ENCODE measurements at regions of chr14 and their contacts with region 1.

Region 1: GRCh38 chr14:53306267-53306721 is 153.2 kb upstream of the DDHD1 start:
- DNase-seq: peak in 13 of 14 experiments; percentile 1 to 63 (median 16)
- ATAC-seq: peak; percentile 41
- H3K4me3 ChIP-seq: peak overlapping the region; percentile 30
- H3K4me3 Mint-ChIP-seq: peak overlapping the region; percentile 0
- H3K27ac ChIP-seq: no peak overlapping the region
- H3K27ac Mint-ChIP-seq: no peak overlapping the region
- H3K4me1 ChIP-seq: peaks cover 3% of the 10 kb centered on the region
- H3K4me1 Mint-ChIP-seq: no peaks in the 10 kb centered on the region
- H3K27me3 ChIP-seq: peaks cover 0 to 7% of the 10 kb centered on the region in 2 experiments
- H3K27me3 Mint-ChIP-seq: peaks cover 5% of the 10 kb centered on the region
- CTCF ChIP-seq: peak; percentile 68

Region 2: GRCh38 chr14:52862632-52863335 is 443.5 kb before region 1 on chr14:
- CTCF ChIA-PET with region 1: no interaction called
- POLR2A ChIA-PET with region 1: no interaction called
- intact Hi-C with region 1: no loop called
- DNase-seq: no peak
- ATAC-seq: no peak
- H3K4me3 ChIP-seq: no peak overlapping the region
- H3K4me3 Mint-ChIP-seq: no peak overlapping the region
- H3K27ac ChIP-seq: no peak overlapping the region
- H3K27ac Mint-ChIP-seq: no peak overlapping the region
- H3K4me1 ChIP-seq: no peaks in the 10 kb centered on the region
- H3K4me1 Mint-ChIP-seq: no peaks in the 10 kb centered on the region
- H3K27me3 ChIP-seq: no peaks in the 10 kb centered on the region
- H3K27me3 Mint-ChIP-seq: no peaks in the 10 kb centered on the region
- CTCF ChIP-seq: no peak

Region 3: GRCh38 chr14:52961060-52961639 is 345.1 kb before region 1 on chr14:
- CTCF ChIA-PET with region 1: no interaction called
- POLR2A ChIA-PET with region 1: no interaction called
- intact Hi-C with region 1: loop called in 1 of 2 experiments (anchors 5 kb)
- DNase-seq: peak; percentile 32 to 82 (median 49)
- ATAC-seq: peak; percentile 91
- H3K4me3 ChIP-seq: no peak overlapping the region
- H3K4me3 Mint-ChIP-seq: no peak overlapping the region
- H3K27ac ChIP-seq: peak overlapping the region in 1 of 2 donors; percentile 17
- H3K27ac Mint-ChIP-seq: peak overlapping the region; percentile 11
- H3K4me1 ChIP-seq: peaks cover 9% of the 10 kb centered on the region
- H3K4me1 Mint-ChIP-seq: peaks cover 9% of the 10 kb centered on the region
- H3K27me3 ChIP-seq: no peaks in the 10 kb centered on the region
- H3K27me3 Mint-ChIP-seq: no peaks in the 10 kb centered on the region
- CTCF ChIP-seq: peak; percentile 62

Region 4: GRCh38 chr14:53055003-53055402 is 251.3 kb before region 1 on chr14:
- CTCF ChIA-PET with region 1: interaction called, 3 read pairs
- POLR2A ChIA-PET with region 1: no interaction called
- intact Hi-C with region 1: loop called in 1 of 2 experiments (anchors 5 kb)
- DNase-seq: peak in 3 of 14 experiments; percentile 47 to 62 (median 61)
- ATAC-seq: peak; percentile 51
- H3K4me3 ChIP-seq: no peak overlapping the region
- H3K4me3 Mint-ChIP-seq: no peak overlapping the region
- H3K27ac ChIP-seq: no peak overlapping the region
- H3K27ac Mint-ChIP-seq: no peak overlapping the region
- H3K4me1 ChIP-seq: no peaks in the 10 kb centered on the region
- H3K4me1 Mint-ChIP-seq: peaks cover 4% of the 10 kb centered on the region
- H3K27me3 ChIP-seq: no peaks in the 10 kb centered on the region
- H3K27me3 Mint-ChIP-seq: no peaks in the 10 kb centered on the region
- CTCF ChIP-seq: peak; percentile 90

Region 5: GRCh38 chr14:53295985-53296582 is 10.2 kb before region 1 on chr14:
- CTCF ChIA-PET with region 1: interaction called, 22 read pairs
- POLR2A ChIA-PET with region 1: no interaction called
- intact Hi-C with region 1: no loop called
- DNase-seq: peak in 5 of 14 experiments; percentile 11 to 65 (median 39)
- ATAC-seq: no peak
- H3K4me3 ChIP-seq: no peak overlapping the region
- H3K4me3 Mint-ChIP-seq: no peak overlapping the region
- H3K27ac ChIP-seq: no peak overlapping the region
- H3K27ac Mint-ChIP-seq: no peak overlapping the region
- H3K4me1 ChIP-seq: no peaks in the 10 kb centered on the region
- H3K4me1 Mint-ChIP-seq: no peaks in the 10 kb centered on the region
- H3K27me3 ChIP-seq: no peaks in the 10 kb centered on the region
- H3K27me3 Mint-ChIP-seq: no peaks in the 10 kb centered on the region
- CTCF ChIP-seq: peak; percentile 88

Region 6: DNA sequence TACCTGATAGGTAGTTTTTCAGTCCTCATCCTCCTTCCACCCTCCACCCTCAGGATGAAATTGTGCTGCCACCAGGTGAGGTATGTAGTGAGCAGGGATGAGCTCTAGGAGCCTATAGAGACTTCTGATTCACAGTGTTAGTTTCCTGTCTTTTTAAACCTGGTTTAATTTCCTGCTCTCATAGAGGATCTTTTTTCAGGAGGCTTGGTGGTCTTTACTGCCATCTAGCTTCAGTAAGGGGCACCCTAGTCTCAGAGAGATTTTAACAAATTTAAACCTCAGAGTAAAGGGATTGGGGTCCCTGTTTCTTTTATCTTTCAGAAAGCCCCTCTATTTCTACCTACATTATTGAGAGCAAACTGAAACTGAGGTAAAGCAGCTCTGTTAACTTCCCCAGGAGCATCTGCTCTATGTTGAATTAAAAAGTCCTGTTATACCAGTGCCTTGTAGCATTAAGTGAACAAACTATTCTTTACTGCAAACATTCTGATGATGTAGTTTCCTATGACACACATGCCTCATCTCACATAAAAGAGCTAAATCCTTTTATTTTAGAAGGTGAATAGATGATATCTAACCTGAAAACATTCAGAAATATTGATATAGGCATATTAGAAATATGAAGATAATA is 19.0 kb after region 1 on chr14:
- CTCF ChIA-PET with region 1: no interaction called
- POLR2A ChIA-PET with region 1: no interaction called
- intact Hi-C with region 1: no loop called
- DNase-seq: no peak
- ATAC-seq: no peak
- H3K4me3 ChIP-seq: no peak overlapping the region
- H3K4me3 Mint-ChIP-seq: no peak overlapping the region
- H3K27ac ChIP-seq: no peak overlapping the region
- H3K27ac Mint-ChIP-seq: no peak overlapping the region
- H3K4me1 ChIP-seq: no peaks in the 10 kb centered on the region
- H3K4me1 Mint-ChIP-seq: no peaks in the 10 kb centered on the region
- H3K27me3 ChIP-seq: no peaks in the 10 kb centered on the region
- H3K27me3 Mint-ChIP-seq: no peaks in the 10 kb centered on the region
- CTCF ChIP-seq: no peak

Region 7: GRCh38 chr14:54488646-54489317 is 1182.5 kb after region 1 on chr14 and contains the start of gene GMFB:
- CTCF ChIA-PET with region 1: no interaction called
- POLR2A ChIA-PET with region 1: no interaction called
- intact Hi-C with region 1: no loop called
- DNase-seq: peak; percentile 79 to 95 (median 87)
- ATAC-seq: peak; percentile 95
- H3K4me3 ChIP-seq: peak within 1 kb of the TSS; percentile 95
- H3K4me3 Mint-ChIP-seq: peak within 1 kb of the TSS; percentile 99
- H3K27ac ChIP-seq: peak within 1 kb of the TSS; percentile 68 to 84
- H3K27ac Mint-ChIP-seq: peak within 1 kb of the TSS; percentile 86
- H3K4me1 ChIP-seq: peaks cover 32% of the 10 kb centered on the region
- H3K4me1 Mint-ChIP-seq: peaks cover 70% of the 10 kb centered on the region
- H3K27me3 ChIP-seq: no peaks in the 10 kb centered on the region
- H3K27me3 Mint-ChIP-seq: no peaks in the 10 kb centered on the region
- CTCF ChIP-seq: no peak
- total RNA-seq, gene GMFB: 39.5 to 43.5 TPM

Measured in CD4-positive, alpha-beta T cell (primary cell).